Caco-2 (cell line): ENCODE measurements at regions of chr21 and their contacts with region 1.

Region 1: DNA sequence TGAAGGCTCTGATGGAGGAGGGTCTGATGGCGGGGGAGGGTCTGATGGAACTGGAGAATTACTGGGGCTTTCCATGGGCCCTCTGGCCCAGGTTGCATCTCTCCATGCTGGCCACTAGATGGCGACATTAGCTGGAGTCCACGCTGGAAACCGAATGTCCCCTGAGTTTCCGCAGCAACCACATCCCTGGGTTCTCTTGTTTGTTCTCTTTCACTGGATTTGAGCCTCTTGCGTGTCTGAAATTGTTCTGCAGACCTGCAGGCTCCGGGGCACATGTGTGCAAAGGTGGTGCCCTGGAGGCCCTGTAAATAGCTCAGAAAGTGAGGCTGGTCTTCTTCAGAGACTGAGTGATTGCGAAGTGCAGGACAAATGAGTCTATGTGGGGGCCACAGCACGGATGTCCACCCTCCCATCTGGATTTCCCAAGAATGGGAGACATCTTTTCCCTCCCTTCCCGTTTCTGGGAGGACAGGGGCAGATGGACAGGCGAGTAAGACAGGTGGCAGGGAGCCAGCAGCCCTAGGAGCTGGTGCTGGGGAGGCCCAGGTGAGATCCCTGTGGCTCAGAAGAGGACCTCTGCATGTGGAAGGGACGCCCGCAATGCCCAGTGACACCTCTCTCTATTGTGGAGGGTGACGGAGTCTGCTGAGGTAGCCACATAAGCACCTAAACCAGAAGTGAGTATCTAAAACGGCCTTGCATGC is 73.2 kb upstream of the ABCG1 start:
- DNase-seq: peak; percentile 57 to 70
- H3K4me3 ChIP-seq: no peak overlapping the region
- H3K4me3 Mint-ChIP-seq: no peak overlapping the region
- H3K27ac Mint-ChIP-seq: no peak overlapping the region
- H3K4me1 ChIP-seq: no peaks in the 10 kb centered on the region; the same call in 1 of the 2 replicates
- H3K4me1 Mint-ChIP-seq: peaks cover 10% of the 10 kb centered on the region
- H3K27me3 ChIP-seq: no peaks in the 10 kb centered on the region
- H3K27me3 Mint-ChIP-seq: no peaks in the 10 kb centered on the region
- CTCF ChIP-seq: peak; percentile 83 to 90

Region 2: GRCh38 chr21:41322487-41323382 is 823.0 kb before region 1 on chr21:
- CTCF ChIA-PET with region 1: interaction called, 10 read pairs
- POLR2A ChIA-PET with region 1: no interaction called
- intact Hi-C with region 1: no loop called
- DNase-seq: peak; percentile 90 to 94
- H3K4me3 ChIP-seq: peak overlapping the region; percentile 43
- H3K4me3 Mint-ChIP-seq: peak overlapping the region; percentile 79
- H3K27ac Mint-ChIP-seq: peak overlapping the region; percentile 92
- H3K4me1 ChIP-seq: peaks cover 52% of the 10 kb centered on the region
- H3K4me1 Mint-ChIP-seq: peaks cover 28% of the 10 kb centered on the region
- H3K27me3 ChIP-seq: no peaks in the 10 kb centered on the region
- H3K27me3 Mint-ChIP-seq: no peaks in the 10 kb centered on the region
- CTCF ChIP-seq: no peak

Region 3: GRCh38 chr21:42199488-42200458 is 54.1 kb after region 1 on chr21:
- CTCF ChIA-PET with region 1: no interaction called
- POLR2A ChIA-PET with region 1: no interaction called
- intact Hi-C with region 1: no loop called
- DNase-seq: no peak
- H3K4me3 ChIP-seq: no peak overlapping the region
- H3K4me3 Mint-ChIP-seq: no peak overlapping the region
- H3K27ac Mint-ChIP-seq: no peak overlapping the region
- H3K4me1 ChIP-seq: no peaks in the 10 kb centered on the region
- H3K4me1 Mint-ChIP-seq: no peaks in the 10 kb centered on the region
- H3K27me3 ChIP-seq: no peaks in the 10 kb centered on the region; the same call in 1 of the 2 replicates
- H3K27me3 Mint-ChIP-seq: peaks cover 8% of the 10 kb centered on the region
- CTCF ChIP-seq: no peak

Region 4: DNA sequence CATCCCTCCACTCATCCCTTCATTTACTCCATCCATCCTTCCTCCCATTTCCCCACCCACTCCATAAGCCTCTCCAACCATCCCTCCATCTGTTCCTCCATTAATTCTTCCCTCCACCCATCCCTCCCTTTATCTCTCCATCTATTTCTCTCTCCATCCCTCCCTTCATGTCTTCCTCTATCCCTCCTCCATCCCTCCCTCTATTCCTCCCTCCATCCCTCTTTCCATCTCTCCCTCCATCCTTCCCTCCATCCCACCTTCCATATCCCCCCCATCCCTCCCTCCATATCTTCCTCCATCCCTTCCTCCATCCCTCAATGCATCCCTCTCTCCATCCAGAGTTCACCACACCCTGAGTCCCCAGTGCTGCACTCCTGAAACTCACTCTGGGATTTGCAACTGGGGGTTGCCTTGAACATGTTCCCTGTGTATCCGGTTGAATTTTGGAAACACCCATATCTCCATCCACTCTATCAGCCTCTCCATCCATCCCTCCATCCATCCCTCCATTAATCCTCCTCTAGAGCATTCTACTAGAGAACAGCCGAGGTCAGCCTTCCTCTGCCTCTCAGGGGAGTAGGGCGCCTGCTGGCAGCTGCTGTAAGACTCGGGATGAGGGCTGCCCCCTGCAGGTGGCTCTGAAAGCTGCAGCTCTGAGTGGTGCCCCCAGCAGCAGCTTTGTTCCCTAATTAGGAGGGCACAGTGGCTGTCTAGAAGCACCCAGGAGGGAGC is 112.6 kb after region 1 on chr21:
- CTCF ChIA-PET with region 1: interaction called, 9 read pairs
- POLR2A ChIA-PET with region 1: no interaction called
- intact Hi-C with region 1: loop called (anchors 1 kb)
- DNase-seq: peak; percentile 50 to 67
- H3K4me3 ChIP-seq: no peak overlapping the region
- H3K4me3 Mint-ChIP-seq: no peak overlapping the region
- H3K27ac Mint-ChIP-seq: no peak overlapping the region
- H3K4me1 ChIP-seq: peaks cover 7% of the 10 kb centered on the region
- H3K4me1 Mint-ChIP-seq: no peaks in the 10 kb centered on the region
- H3K27me3 ChIP-seq: no peaks in the 10 kb centered on the region; the same call in 1 of the 2 replicates
- H3K27me3 Mint-ChIP-seq: peaks cover 6% of the 10 kb centered on the region
- CTCF ChIP-seq: peak; percentile 74 to 77

Region 5: GRCh38 chr21:42381334-42381984 is 235.7 kb after region 1 on chr21:
- CTCF ChIA-PET with region 1: interaction called, 7 read pairs
- POLR2A ChIA-PET with region 1: no interaction called
- intact Hi-C with region 1: loop called (anchors 1 kb)
- DNase-seq: peak; percentile 63 to 64
- H3K4me3 ChIP-seq: no peak overlapping the region
- H3K4me3 Mint-ChIP-seq: no peak overlapping the region
- H3K27ac Mint-ChIP-seq: no peak overlapping the region
- H3K4me1 ChIP-seq: peaks cover 8% of the 10 kb centered on the region
- H3K4me1 Mint-ChIP-seq: peaks cover 16% of the 10 kb centered on the region
- H3K27me3 ChIP-seq: no peaks in the 10 kb centered on the region
- H3K27me3 Mint-ChIP-seq: no peaks in the 10 kb centered on the region
- CTCF ChIP-seq: peak; percentile 77 to 94

Region 6: GRCh38 chr21:42537106-42537742 is 391.5 kb after region 1 on chr21:
- CTCF ChIA-PET with region 1: no interaction called
- POLR2A ChIA-PET with region 1: no interaction called
- intact Hi-C with region 1: loop called (anchors 1 kb)
- DNase-seq: peak; percentile 19 to 34
- H3K4me3 ChIP-seq: no peak overlapping the region
- H3K4me3 Mint-ChIP-seq: no peak overlapping the region
- H3K27ac Mint-ChIP-seq: no peak overlapping the region
- H3K4me1 ChIP-seq: no peaks in the 10 kb centered on the region
- H3K4me1 Mint-ChIP-seq: no peaks in the 10 kb centered on the region
- H3K27me3 ChIP-seq: no peaks in the 10 kb centered on the region
- H3K27me3 Mint-ChIP-seq: no peaks in the 10 kb centered on the region
- CTCF ChIP-seq: peak in 1 of 2 experiments; percentile 56